ENCODE measurements at regions of chr1 and their contacts with region 1.

Region 1: DNA sequence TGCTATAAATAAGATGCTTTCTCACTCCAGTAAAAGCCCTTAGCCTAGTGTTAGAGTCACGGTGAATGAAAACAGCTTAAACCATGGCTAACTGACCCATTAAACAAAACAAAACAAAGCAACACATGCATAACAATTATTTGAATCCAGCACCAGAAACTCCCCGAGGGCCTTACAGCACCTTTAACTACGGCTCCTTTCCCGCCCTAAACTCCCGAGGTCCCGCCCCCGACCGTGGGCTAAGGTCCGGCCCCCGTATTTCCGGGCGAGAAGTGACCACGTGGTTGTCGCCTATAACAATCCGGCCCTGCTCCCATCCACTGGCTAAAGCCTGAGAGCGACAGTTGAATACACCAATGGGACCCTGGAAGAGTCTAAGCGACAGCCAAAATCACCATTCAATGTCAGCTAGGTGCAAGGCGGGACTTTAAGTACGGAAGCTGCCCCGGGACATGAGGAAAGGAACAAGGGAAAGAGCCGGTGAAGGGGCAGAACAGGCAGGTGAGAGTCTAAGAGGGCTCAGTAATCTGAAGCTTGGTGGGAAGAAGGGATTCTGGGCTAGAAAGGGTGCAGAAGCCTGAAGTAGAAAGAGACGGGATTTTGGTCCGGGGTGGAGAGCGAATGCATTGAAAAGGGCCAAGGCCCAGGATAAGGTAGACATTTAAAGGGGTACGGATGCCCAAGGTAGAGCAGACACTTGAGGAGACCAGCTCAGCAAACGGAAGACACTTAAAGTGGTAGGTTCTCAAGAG is at the start of gene FLAD1:
- DNase-seq: peak; percentile 90
- ATAC-seq: peak; percentile 100
- H3K4me3 Mint-ChIP-seq: no peak within 1 kb of the TSS
- H3K27ac Mint-ChIP-seq: no peak within 1 kb of the TSS
- H3K4me1 Mint-ChIP-seq: peaks cover 10% of the 10 kb centered on the region
- H3K27me3 Mint-ChIP-seq: no peaks in the 10 kb centered on the region
- total RNA-seq, gene FLAD1: 46.2 to 48.9 TPM

Region 2: GRCh38 chr1:154925335-154926170 is 57.5 kb before region 1 on chr1:
- POLR2A ChIA-PET with region 1: no interaction called
- DNase-seq: no peak
- ATAC-seq: peak; percentile 95
- H3K4me3 Mint-ChIP-seq: no peak overlapping the region
- H3K27ac Mint-ChIP-seq: peak overlapping the region; percentile 84
- H3K4me1 Mint-ChIP-seq: peaks cover 19% of the 10 kb centered on the region
- H3K27me3 Mint-ChIP-seq: no peaks in the 10 kb centered on the region

Region 3: DNA sequence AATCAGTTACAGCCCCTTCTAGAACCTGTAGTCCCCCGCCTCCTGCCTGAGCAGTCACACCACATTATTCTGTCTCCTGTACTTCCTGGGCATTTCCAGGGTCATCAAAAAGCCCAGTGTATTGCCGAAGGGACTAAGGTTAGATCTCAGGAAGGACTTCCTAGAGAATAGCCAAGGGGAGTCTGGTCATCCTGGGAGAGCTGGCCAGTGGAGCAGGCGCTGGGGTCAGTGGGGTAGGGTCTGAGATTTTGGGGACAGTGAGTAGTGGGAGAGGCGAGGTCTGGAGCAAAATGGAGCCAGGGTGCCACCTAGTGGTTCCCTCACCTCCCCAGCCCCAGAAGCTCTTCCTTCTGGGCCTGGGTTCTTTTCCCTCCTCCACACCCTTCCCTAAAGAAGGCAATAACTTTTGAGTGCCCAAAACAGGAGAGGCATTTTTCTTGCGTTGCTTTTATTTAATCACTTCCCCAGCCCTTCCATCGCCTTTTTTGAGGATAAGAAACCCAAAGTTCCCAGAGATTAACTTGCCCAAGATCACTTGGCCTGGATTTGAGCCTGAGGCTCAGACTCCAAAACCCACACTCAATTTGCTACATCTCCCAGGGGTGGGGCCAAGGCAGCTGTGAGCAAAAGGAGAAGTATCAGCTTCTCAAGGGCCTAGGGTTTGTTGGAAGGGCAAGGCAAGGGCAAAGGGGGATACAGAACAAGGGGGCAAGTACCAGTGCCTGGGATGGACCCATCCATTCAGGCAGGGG is 39.2 kb before region 1 on chr1:
- POLR2A ChIA-PET with region 1: no interaction called
- DNase-seq: peak; percentile 52
- ATAC-seq: no peak
- H3K4me3 Mint-ChIP-seq: peak overlapping the region; percentile 10
- H3K27ac Mint-ChIP-seq: peak overlapping the region; percentile 92
- H3K4me1 Mint-ChIP-seq: peaks cover 46% of the 10 kb centered on the region
- H3K27me3 Mint-ChIP-seq: no peaks in the 10 kb centered on the region

Region 4: GRCh38 chr1:154955718-154956543 is 27.1 kb before region 1 on chr1 and contains the start of gene PBXIP1:
- POLR2A ChIA-PET with region 1: interaction called, 16 read pairs
- DNase-seq: peak; percentile 69
- ATAC-seq: peak; percentile 48
- H3K4me3 Mint-ChIP-seq: peak within 1 kb of the TSS; percentile 97
- H3K27ac Mint-ChIP-seq: peak within 1 kb of the TSS; percentile 99
- H3K4me1 Mint-ChIP-seq: peaks cover 60% of the 10 kb centered on the region
- H3K27me3 Mint-ChIP-seq: no peaks in the 10 kb centered on the region
- total RNA-seq, gene PBXIP1: 149 to 155 TPM

Region 5: DNA sequence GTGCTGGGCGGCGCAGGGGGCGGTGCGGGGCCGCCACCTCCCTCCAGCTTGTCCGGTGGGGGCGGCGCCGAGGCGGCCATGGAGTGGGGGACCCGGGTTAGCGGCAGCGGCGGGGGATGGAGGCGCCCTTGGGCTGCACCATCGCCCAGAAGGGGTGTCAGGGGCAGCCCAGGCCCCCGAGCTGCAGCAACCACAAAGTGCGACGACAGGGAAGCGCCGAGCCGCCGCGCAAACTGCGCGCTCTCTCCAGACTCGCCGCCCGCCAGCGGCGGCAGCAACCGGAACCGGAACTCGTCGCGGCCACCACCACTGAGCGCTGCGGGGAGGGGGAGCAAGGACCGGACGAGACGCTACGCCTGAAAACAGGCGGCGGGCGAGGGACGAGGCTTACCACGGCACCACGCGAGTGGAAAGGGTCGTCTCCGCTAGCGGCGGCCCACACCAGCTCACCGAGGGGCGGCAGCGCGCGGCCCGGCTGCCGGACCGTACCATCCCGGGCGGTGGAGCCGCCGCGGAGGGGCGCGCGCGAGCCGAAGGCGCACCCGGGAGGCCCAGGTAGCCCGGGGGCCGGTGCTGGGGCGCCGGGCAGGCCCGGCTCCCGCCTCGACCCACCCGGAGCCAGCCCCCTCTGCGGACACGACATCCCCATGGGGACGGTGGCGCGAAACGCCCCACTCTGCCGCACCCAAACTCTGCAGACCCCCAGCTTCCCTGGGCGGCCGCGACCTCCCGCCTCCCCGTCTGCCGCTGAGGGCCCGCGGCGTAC is 21.4 kb before region 1 on chr1 and contains the start of gene PYGO2:
- POLR2A ChIA-PET with region 1: interaction called, 16 read pairs
- DNase-seq: peak; percentile 90
- ATAC-seq: peak; percentile 80
- H3K4me3 Mint-ChIP-seq: peak within 1 kb of the TSS; percentile 94
- H3K27ac Mint-ChIP-seq: peak within 1 kb of the TSS; percentile 90
- H3K4me1 Mint-ChIP-seq: peaks cover 24% of the 10 kb centered on the region
- H3K27me3 Mint-ChIP-seq: no peaks in the 10 kb centered on the region
- total RNA-seq, gene PYGO2: 55.3 TPM

Region 6: GRCh38 chr1:155017041-155017945 is 34.2 kb after region 1 on chr1:
- POLR2A ChIA-PET with region 1: interaction called, 16 read pairs
- DNase-seq: peak; percentile 92
- ATAC-seq: peak; percentile 98
- H3K4me3 Mint-ChIP-seq: peak overlapping the region; percentile 74
- H3K27ac Mint-ChIP-seq: peak overlapping the region; percentile 70
- H3K4me1 Mint-ChIP-seq: peaks cover 42% of the 10 kb centered on the region
- H3K27me3 Mint-ChIP-seq: peaks cover 5% of the 10 kb centered on the region

Region 7: GRCh38 chr1:155093911-155094621 is 111.0 kb after region 1 on chr1:
- POLR2A ChIA-PET with region 1: no interaction called
- DNase-seq: no peak
- ATAC-seq: peak; percentile 30
- H3K4me3 Mint-ChIP-seq: no peak overlapping the region
- H3K27ac Mint-ChIP-seq: no peak overlapping the region
- H3K4me1 Mint-ChIP-seq: peaks cover 3% of the 10 kb centered on the region
- H3K27me3 Mint-ChIP-seq: peaks cover 33% of the 10 kb centered on the region

Measured in activated naive CD8-positive, alpha-beta T cell treated with anti-CD3 and anti-CD28 coated beads, Interleukin-2, amount 10 ng/mL, durations not matched to agents 7 days and 5 days (primary cell).